Cardiac septum (tissue), 1 donor: ENCODE measurements at regions of chr13 and their contacts with region 1.

Region 1: DNA sequence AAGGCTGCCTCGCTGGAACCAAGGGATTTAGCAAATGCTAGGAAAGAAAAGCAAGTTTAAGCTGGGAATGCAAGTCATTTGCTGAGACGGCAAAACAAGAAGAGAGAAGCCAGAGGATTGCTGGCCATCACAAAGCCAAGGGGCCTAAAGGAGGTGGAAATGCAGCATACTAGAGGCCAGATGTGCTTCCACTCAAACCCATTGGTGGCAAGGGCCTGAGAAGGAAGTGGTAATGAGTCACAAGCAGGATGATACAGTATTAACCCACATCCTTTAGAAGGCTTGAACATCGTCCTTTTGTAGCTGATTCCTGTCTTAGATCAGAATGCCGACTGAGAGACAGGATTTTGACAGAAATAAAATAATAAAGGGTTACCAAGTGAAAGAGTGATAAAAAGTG is 68.2 kb downstream of the ITGBL1 start:
- DNase-seq: no peak

Region 2: DNA sequence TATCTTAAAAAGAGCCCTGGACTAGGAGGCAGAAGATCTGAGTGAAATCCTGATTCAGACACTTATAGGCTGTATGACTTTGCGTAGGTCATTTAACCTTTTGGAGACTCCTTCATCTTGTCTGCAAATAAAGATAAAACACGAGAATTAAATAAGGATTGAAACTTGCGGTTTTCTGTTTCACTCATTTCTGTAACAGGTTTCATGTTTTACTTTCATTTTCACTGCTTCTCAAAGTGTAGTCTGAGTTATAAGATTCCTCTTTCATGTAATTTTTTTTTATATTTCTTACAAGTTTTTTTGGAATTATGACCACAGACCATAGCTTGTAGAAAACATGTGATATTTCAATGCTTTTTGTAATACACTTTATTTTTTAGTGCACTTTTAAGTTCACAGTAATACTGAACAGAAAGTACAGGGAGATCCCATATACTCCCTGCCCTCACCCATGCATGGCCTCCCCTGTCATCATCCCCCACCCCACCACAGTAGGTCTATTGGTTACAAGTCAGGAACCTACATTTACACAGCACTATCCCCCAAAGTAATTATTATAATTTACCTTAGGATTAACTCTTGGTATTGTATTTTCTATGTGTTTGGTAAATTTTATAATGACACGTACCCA is 106.4 kb after region 1 on chr13:
- intact Hi-C with region 1: loop called (anchors 10 kb)
- DNase-seq: no peak